ENCODE measurements at regions of chr2 and their contacts with region 1.

Region 1: GRCh38 chr2:59301466-59302402 is 1060.6 kb upstream of the FANCL start:
- DNase-seq: peak; percentile 21
- ATAC-seq: peak; percentile 76 to 87

Region 2: DNA sequence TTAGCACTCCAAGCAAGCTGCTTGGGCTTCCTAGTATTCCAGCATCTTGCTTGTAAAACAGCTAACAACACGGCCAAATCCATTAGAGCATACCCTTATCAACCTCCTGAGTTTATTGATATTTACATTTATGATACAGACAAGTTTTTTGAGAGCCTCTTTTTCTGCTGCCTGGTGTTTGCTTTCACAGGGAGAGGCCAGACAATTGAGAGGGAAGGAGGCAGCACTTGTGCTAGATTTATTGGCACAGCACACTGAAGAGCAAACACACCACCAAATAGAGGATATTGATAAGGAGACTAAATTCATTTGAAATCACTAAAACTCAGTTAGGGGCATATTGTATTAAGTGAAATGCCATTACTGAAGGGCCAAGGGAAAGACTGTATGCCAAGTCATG is 81.7 kb after region 1 on chr2:
- intact Hi-C with region 1: no loop called
- DNase-seq: no peak
- ATAC-seq: no peak

Region 3: DNA sequence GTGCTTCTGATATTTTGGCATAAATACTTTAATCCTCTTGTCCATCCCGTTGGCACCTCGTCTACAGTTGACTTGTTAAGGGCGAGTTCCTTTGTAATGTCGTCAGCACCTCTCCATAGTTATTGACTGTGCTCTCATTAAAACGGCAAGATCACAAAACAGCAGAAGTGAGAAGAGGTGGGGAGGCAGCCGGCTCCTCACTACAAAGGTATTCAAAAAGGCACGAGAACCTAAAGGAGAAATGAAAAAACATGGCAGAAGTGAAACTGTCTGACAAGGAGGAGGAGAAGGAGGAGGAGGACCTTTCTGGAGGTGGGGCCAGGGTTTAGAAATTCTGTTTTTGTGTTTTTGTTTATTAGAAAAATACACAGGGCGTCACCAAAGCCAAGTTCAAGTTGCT is 1016.1 kb after region 1 on chr2:
- intact Hi-C with region 1: loop called in 1 of 2 experiments (anchors 5 kb)
- DNase-seq: no peak
- ATAC-seq: peak; percentile 39 to 75

Region 4: DNA sequence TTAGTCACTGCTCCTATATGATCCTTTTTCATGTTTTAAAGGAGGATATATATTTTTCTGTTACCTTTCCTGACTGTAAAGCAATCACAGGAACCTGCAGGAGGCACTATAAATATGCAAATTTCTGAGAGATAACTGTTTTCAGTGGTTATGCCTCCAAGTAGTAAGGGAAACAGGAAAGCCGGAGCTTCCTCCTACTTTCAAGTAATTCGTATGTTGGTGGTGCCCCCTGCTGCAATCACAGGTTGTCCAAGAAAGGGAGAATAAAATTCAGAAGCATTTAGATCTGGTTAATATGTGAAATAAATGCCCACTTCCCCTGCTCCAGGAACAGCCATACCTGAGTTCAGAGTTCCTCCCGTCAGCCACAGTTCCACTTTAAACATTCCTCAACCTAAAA is 1263.7 kb after region 1 on chr2:
- intact Hi-C with region 1: loop called (anchors 5 to 10 kb)
- DNase-seq: no peak
- ATAC-seq: no peak